Aorta (tissue), 5 donors: ENCODE measurements at regions of chr5 and their contacts with region 1.

Region 1: DNA sequence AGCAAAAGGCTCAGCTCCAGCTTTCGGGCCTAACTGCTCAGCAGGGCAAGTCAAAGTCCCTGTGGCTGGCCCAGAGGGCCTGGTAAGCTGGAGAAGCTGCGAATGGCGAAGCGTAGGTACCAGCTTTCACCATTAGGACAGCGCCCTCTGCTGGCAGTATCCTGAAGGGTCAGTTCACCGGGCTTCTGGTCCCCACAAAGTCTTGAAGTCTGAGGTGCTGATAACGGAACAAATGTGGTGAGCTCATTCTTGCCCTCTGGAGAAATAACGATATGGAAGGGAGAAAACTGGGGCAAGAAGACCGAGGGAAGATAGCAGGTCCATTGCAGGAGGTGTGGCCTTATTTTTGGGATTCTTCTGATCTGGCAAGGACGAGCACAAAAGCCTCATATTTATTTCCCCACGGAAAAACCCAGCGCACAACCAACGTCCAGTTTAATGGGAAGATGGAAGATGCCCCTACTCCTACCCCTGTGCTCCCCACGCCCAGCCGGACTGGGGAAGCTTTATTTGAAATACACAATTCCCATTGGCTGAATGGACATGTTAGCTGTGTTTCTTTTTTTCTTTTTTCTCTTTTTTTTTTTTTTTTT is 7.2 kb downstream of the SOWAHA start:
- DNase-seq: peak; percentile 95 to 96
- ATAC-seq: peak; percentile 87
- H3K4me3 ChIP-seq: no peak overlapping the region
- H3K27ac ChIP-seq: no peak overlapping the region
- H3K4me1 ChIP-seq: no peaks in the 10 kb centered on the region
- H3K27me3 ChIP-seq: no peaks in the 10 kb centered on the region

Region 2: DNA sequence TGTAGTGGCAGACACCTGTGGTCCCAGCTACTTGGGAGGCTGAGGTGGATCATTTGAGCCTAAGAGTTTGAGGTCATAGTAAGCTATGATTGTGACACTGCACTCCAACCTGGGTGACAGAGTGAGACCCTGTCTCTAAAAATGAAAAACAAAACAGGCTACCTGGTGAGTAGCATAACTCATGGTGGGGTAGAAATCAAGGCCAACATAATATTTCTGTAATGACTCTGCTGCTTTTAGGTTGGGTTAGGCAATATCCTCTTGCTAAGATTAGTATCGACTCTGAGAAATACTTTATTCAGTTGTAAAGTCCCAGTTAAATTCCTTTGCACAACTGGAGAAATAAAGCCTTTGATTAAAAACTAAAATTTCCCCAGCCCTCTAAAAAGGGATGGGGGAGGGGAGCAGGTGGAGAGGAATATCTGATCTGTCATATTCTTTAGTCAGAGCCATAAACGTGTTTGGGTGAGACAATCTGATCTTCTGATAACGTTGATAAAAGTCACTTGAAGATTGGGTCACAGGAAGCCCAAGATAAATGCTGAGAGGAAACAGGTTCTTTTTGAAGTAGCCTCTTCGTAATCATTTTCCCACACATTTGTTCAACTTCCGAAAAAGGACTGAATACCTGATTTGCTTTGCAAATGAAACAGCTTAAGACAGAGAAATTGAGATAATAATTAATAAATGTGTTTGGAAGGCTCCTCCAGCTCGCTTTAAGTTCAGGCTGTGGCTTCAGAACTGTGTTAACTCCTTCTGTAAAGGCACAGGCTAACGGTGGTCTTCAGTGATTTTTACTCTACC is 131.5 kb before region 1 on chr5:
- intact Hi-C with region 1: no loop called
- DNase-seq: no peak
- ATAC-seq: no peak
- H3K4me3 ChIP-seq: no peak overlapping the region
- H3K27ac ChIP-seq: no peak overlapping the region
- H3K4me1 ChIP-seq: no peaks in the 10 kb centered on the region
- H3K27me3 ChIP-seq: no peaks in the 10 kb centered on the region

Region 3: DNA sequence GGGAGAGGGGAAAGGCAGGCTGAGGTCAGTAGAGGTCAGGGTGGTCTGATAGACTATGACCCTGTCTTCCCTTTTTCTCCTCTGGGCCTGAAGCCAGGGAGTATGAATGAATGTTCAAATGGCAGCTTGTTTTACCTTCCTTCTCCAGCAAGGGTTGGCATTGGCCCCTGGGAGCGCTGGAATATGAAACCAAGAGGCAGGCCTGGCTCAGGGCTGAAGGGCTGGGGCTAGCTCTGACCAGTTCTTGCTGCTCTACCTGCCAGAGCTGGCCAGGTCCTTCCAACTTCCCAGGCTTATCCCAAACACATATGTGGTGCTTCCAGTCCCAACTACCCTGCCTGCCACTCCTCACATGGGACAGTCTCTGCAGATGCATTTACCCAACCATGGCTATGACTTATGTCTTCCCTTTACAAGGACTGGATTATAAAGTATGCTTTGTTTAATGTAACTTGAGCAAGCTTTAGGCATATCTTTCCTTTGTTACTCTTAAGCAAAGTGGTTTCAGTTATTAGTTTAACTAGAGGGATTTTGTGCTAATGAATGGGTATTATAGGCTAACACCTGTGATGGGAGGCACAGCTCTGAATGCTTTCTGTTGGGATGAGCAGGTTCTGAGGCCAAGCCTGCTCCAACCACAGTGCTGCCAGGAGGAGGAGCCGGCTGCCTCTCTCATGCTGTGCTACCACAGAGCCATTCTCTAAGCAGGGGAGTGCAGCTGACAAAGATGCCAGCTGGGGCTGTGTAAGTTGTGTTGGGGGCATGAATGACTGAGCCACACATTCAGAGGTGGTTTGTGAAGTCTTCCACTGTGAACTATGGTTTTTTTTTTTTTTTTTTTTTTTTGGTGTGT is 66.9 kb before region 1 on chr5:
- intact Hi-C with region 1: loop called (anchors 2 to 5 kb)
- DNase-seq: no peak
- ATAC-seq: no peak
- H3K4me3 ChIP-seq: no peak overlapping the region
- H3K27ac ChIP-seq: no peak overlapping the region
- H3K4me1 ChIP-seq: no peaks in the 10 kb centered on the region
- H3K27me3 ChIP-seq: no peaks in the 10 kb centered on the region